Naive thymus-derived CD4-positive, alpha-beta T cell (primary cell): ENCODE measurements at regions of chr3 and their contacts with region 1.

Region 1: DNA sequence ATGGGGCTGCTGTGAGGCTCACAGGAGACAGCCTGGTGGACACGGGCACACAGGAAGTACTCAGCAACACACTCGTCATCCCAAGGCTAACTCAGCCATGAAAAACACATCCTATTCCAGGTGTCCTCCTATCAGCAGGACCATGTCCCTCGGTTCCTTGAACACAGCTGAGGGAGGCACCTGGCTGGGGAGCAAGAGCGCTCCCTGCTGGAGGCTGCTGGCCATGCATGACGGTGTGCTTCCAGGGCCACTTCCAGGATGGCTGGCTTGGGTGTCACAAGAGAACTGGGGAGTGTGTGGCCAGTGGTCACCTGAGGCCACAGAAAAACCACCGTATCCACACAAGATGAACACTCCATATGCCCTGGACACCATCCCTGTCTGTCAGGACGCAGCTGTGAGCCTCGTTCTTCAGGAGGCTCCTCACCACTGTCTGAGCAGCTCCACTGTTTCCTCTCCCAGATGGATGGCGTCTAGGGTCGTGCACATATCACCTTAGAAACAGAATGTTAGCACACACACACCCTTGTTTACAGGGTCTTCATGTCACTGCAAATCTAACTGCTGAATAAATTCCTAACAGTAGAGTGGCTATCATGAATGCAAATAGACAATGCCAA is 31.0 kb downstream of the POC1A start:
- DNase-seq: peak; percentile 51 to 84 (median 70)
- ATAC-seq: peak; percentile 86
- H3K4me3 ChIP-seq: no peak overlapping the region
- H3K4me3 Mint-ChIP-seq: no peak overlapping the region
- H3K27ac ChIP-seq: no peak overlapping the region
- H3K27ac Mint-ChIP-seq: no peak overlapping the region
- H3K4me1 ChIP-seq: no peaks in the 10 kb centered on the region
- H3K4me1 Mint-ChIP-seq: peaks cover 0 to 28% (median 0%) of the 10 kb centered on the region in 7 donors
- H3K27me3 ChIP-seq: no peaks in the 10 kb centered on the region
- H3K27me3 Mint-ChIP-seq: no peaks in the 10 kb centered on the region

Region 2: GRCh38 chr3:52001443-52001974 is 121.7 kb before region 1 on chr3:
- CTCF ChIA-PET with region 1: interaction called, 67 read pairs
- POLR2A ChIA-PET with region 1: interaction called, 5 read pairs
- intact Hi-C with region 1: loop called in 1 of 2 experiments (anchors 1 kb)
- DNase-seq: peak; percentile 73 to 86 (median 81)
- ATAC-seq: peak; percentile 98
- H3K4me3 ChIP-seq: no peak overlapping the region
- H3K4me3 Mint-ChIP-seq: peak overlapping the region in 2 of 10 donors; percentile 12 to 16
- H3K27ac ChIP-seq: no peak overlapping the region
- H3K27ac Mint-ChIP-seq: peak overlapping the region in 3 of 9 donors; percentile 8 to 41 (median 11)
- H3K4me1 ChIP-seq: peaks cover 6 to 22% of the 10 kb centered on the region in 2 donors
- H3K4me1 Mint-ChIP-seq: peaks cover 6 to 24% (median 16%) of the 10 kb centered on the region in 7 donors
- H3K27me3 ChIP-seq: no peaks in the 10 kb centered on the region
- H3K27me3 Mint-ChIP-seq: peaks cover 0 to 16% (median 0%) of the 10 kb centered on the region in 5 donors

Region 3: GRCh38 chr3:52041118-52041731 is 82.0 kb before region 1 on chr3:
- CTCF ChIA-PET with region 1: interaction called, 21 read pairs
- POLR2A ChIA-PET with region 1: no interaction called
- intact Hi-C with region 1: loop called in 1 of 2 experiments (anchors 1 kb)
- DNase-seq: no peak
- ATAC-seq: no peak
- H3K4me3 ChIP-seq: no peak overlapping the region
- H3K4me3 Mint-ChIP-seq: no peak overlapping the region
- H3K27ac ChIP-seq: no peak overlapping the region
- H3K27ac Mint-ChIP-seq: peak overlapping the region in 3 of 9 donors; percentile 28 to 72 (median 41)
- H3K4me1 ChIP-seq: no peaks in the 10 kb centered on the region
- H3K4me1 Mint-ChIP-seq: peaks cover 0 to 34% (median 27%) of the 10 kb centered on the region in 7 donors
- H3K27me3 ChIP-seq: no peaks in the 10 kb centered on the region
- H3K27me3 Mint-ChIP-seq: peaks cover 0 to 9% (median 0%) of the 10 kb centered on the region in 5 donors